AG04450 (cell line): ENCODE measurements at regions of chr17 and their contacts with region 1.

Region 1: GRCh38 chr17:36482611-36483504 is 3.6 kb upstream of the ZNHIT3 start:
- DNase-seq: peak; percentile 38
- H3K4me3 ChIP-seq: peak overlapping the region; percentile 40
- H3K27ac ChIP-seq: no peak overlapping the region
- H3K27me3 ChIP-seq: peaks cover 11% of the 10 kb centered on the region
- CTCF ChIP-seq: peak; percentile 79

Region 2: DNA sequence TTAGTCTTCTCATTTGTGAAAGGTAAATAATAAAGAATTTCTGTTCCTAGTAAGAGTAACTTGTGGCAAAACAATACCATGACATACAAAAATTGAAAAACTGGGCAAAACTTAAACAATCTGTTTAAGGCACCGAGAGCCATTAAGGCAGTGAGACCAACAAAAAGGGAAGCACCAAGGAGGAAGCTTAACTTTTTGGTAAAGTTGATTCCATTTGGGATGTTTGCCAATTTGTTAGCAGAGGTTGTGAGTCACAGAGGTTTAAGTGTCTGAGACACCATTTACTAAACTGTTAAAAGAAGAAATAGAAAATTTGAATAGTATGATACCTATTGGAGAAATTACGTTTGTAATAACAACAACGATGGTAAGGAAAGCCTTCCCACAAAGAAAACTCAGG is 1293.6 kb before region 1 on chr17:
- CTCF ChIA-PET with region 1: no interaction called
- POLR2A ChIA-PET with region 1: no interaction called
- DNase-seq: no peak
- H3K4me3 ChIP-seq: no peak overlapping the region
- H3K27ac ChIP-seq: no peak overlapping the region
- H3K27me3 ChIP-seq: no peaks in the 10 kb centered on the region
- CTCF ChIP-seq: no peak

Region 3: GRCh38 chr17:36496018-36496789 is 13.3 kb after region 1 on chr17:
- CTCF ChIA-PET with region 1: interaction called, 13 read pairs
- POLR2A ChIA-PET with region 1: no interaction called
- DNase-seq: no peak
- H3K4me3 ChIP-seq: no peak overlapping the region
- H3K27ac ChIP-seq: no peak overlapping the region
- H3K27me3 ChIP-seq: no peaks in the 10 kb centered on the region
- CTCF ChIP-seq: no peak

Region 4: GRCh38 chr17:36728030-36728991 is 245.5 kb after region 1 on chr17:
- CTCF ChIA-PET with region 1: no interaction called
- POLR2A ChIA-PET with region 1: no interaction called
- DNase-seq: no peak
- H3K4me3 ChIP-seq: no peak overlapping the region
- H3K27ac ChIP-seq: no peak overlapping the region
- H3K27me3 ChIP-seq: peaks cover 47% of the 10 kb centered on the region
- CTCF ChIP-seq: no peak